Left cardiac atrium (tissue), 4 donors: ENCODE measurements at regions of chr4 and their contacts with region 1.

Region 1: GRCh38 chr4:77203380-77204197 is 46.6 kb downstream of the CCNG2 start:
- DNase-seq: peak; percentile 41
- ATAC-seq: peak; percentile 73 to 86

Region 2: GRCh38 chr4:77044461-77045150 is 159.0 kb before region 1 on chr4:
- intact Hi-C with region 1: loop called in 1 of 2 experiments (anchors 5 kb)
- DNase-seq: no peak
- ATAC-seq: peak; percentile 25 to 43

Region 3: GRCh38 chr4:77095101-77095821 is 108.3 kb before region 1 on chr4:
- intact Hi-C with region 1: loop called in 1 of 2 experiments (anchors 5 kb)
- DNase-seq: peak; percentile 84
- ATAC-seq: peak; percentile 95 to 96